Sigmoid colon (tissue), 7 donors: ENCODE measurements at regions of chr14 and their contacts with region 1.

Region 1: GRCh38 chr14:75427482-75428229 is at the start of gene JDP2:
- DNase-seq: peak; percentile 98
- H3K4me3 ChIP-seq: peak within 1 kb of the TSS; percentile 71 to 78 (median 76)
- H3K27ac ChIP-seq: peak within 1 kb of the TSS; percentile 90 to 96 (median 94)
- H3K4me1 ChIP-seq: peaks cover 0 to 53% (median 44%) of the 10 kb centered on the region in 4 donors
- H3K27me3 ChIP-seq: no peaks in the 10 kb centered on the region
- CTCF ChIP-seq: peak in 1 of 4 experiments; percentile 16
- EP300 ChIP-seq: peak in 3 of 4 donors; percentile 30 to 65 (median 59)
- POLR2A ChIP-seq: peak; percentile 47 to 64
- total RNA-seq, gene JDP2: 54.9 to 90.0 (median 58.0) TPM

Region 2: GRCh38 chr14:74860906-74861733 is 566.5 kb before region 1 on chr14:
- intact Hi-C with region 1: no loop called
- DNase-seq: peak; percentile 92
- H3K4me3 ChIP-seq: no peak overlapping the region
- H3K27ac ChIP-seq: no peak overlapping the region
- H3K4me1 ChIP-seq: peaks cover 0 to 10% (median 7%) of the 10 kb centered on the region in 4 donors
- H3K27me3 ChIP-seq: no peaks in the 10 kb centered on the region
- CTCF ChIP-seq: peak; percentile 58 to 89 (median 74)
- EP300 ChIP-seq: no peak
- POLR2A ChIP-seq: no peak

Region 3: GRCh38 chr14:75399821-75400678 is 27.6 kb before region 1 on chr14:
- intact Hi-C with region 1: loop called (anchors 2 kb)
- DNase-seq: peak; percentile 98
- H3K4me3 ChIP-seq: no peak overlapping the region
- H3K27ac ChIP-seq: peak overlapping the region; percentile 75 to 90 (median 86)
- H3K4me1 ChIP-seq: peaks cover 0 to 29% (median 26%) of the 10 kb centered on the region in 4 donors
- H3K27me3 ChIP-seq: no peaks in the 10 kb centered on the region
- CTCF ChIP-seq: no peak
- EP300 ChIP-seq: peak in 3 of 4 donors; percentile 23 to 63 (median 52)
- POLR2A ChIP-seq: no peak

Region 4: DNA sequence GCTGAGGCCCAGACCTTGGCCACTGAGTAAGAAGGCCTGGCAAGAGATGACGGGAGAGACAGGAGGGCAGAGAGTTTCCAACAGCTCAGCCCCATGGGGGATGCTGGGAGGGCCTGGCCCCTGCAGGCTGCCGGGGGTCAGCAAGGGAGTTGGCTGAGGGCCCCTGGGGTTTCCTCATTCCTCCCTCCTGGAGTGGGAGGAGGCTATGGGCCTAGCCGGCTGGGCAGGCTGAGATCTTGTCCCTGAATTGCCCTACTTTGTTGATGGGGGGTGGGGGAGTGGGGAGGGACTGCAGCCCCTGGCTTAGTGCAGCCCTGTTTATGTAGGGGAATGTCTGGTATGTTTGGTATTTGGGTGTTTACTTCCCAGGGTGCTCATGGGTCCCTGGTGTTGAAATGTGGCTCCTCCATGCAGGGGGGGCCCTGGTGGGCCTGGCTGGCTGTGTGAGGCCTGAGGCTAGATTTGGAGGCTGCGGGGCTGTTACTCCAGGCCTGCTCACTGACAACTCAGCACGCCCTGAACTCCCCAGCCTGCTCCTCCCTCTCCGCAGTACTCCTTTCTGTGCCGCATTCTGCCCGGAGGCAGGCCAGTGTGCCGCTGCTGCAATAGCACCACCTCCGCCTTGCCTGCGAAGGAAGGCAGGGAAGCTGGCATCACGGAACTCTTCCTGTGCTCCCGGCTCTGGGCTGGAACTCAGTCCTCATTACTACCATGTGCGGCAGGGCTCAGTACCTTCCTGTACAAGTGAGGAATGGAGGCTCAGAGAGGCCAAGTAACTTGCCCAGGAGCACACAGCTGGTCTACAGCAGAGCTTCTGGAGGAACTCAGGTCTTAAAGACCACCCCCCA is 25.5 kb after region 1 on chr14:
- intact Hi-C with region 1: no loop called
- DNase-seq: peak; percentile 92
- H3K4me3 ChIP-seq: no peak overlapping the region
- H3K27ac ChIP-seq: peak overlapping the region; percentile 74 to 86 (median 85)
- H3K4me1 ChIP-seq: peaks cover 0 to 96% (median 90%) of the 10 kb centered on the region in 4 donors
- H3K27me3 ChIP-seq: no peaks in the 10 kb centered on the region
- CTCF ChIP-seq: no peak
- EP300 ChIP-seq: peak in 1 of 4 donors; percentile 41
- POLR2A ChIP-seq: no peak

Region 5: GRCh38 chr14:75469606-75470237 is 42.1 kb after region 1 on chr14:
- intact Hi-C with region 1: loop called (anchors 5 kb)
- DNase-seq: peak; percentile 90
- H3K4me3 ChIP-seq: no peak overlapping the region
- H3K27ac ChIP-seq: peak overlapping the region; percentile 66 to 79 (median 75)
- H3K4me1 ChIP-seq: peaks cover 0 to 57% (median 41%) of the 10 kb centered on the region in 4 donors
- H3K27me3 ChIP-seq: no peaks in the 10 kb centered on the region
- CTCF ChIP-seq: no peak
- EP300 ChIP-seq: no peak
- POLR2A ChIP-seq: no peak